Activated CD4-positive, alpha-beta memory T cell treated with anti-CD3 and anti-CD28 coated beads for 36 hours (primary cell): ENCODE measurements at regions of chr14 and their contacts with region 1.

Region 1: DNA sequence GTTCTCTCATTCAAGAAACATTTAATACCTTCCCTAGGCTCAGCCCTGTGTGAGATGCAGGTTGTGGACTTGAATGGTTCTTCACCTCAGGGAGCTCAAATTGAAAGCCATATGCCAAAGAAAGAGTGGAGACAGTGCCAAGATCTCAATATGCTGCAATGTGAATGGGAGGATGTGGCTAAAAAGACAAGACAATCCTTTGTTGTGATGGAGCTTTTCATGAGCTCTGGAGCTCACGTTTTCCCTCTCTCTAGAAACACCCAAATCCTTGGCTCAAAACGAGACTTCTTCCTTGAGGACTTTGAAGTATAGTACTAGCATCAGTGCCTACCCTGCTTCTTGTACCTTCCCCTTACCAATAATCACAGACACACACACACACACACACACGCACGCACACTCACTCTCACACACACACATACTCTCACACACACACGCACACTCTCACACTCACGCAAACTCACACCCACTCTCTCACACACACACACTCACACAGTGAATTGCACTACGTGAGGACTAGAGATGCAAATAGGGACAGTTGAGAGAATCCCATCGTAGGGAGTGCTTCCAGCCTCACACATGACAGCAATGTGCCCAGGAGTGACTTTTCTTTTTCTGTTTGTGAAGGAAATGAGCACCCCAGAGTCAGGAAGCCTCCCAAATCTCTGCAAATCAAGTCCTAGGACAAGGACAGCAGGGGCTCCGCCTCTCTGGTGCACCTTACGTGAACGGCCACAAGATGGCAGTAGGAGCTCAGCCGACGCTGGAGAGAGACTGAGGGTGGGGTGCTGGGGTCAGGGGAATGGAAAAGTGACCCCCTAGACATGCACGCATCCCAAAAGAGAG is 231.4 kb downstream of the PCNX1 start:
- DNase-seq: peak; percentile 68
- H3K4me3 Mint-ChIP-seq: no peak overlapping the region
- H3K27ac Mint-ChIP-seq: no peak overlapping the region
- H3K4me1 Mint-ChIP-seq: peaks cover 24% of the 10 kb centered on the region
- H3K27me3 Mint-ChIP-seq: no peaks in the 10 kb centered on the region

Region 2: DNA sequence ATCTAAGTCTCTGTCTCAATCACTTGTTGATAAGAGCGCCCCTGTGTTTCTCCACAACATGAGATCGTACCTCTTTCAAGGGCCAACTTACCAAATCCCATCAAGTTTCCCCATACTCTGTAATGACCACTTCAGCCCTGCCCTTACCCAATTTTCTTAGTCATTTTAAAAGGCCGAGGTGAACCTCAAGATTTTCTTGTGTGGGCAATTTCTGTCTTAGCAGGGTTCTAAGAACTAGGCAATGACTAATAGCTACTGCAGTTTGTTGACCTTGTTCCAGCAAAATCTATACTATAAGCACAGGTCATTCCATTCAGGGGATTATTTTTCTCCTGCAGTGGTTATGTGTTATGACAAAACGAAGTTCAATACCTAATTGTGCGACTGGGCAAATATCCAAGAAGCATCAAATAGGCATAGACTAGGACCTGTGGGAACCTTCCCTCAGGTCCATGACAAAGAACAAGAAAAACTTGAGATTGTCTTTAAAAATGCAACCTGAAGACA is 128.4 kb after region 1 on chr14:
- CTCF ChIA-PET with region 1: interaction called, 4 read pairs
- POLR2A ChIA-PET with region 1: interaction called, 3 read pairs
- intact Hi-C with region 1: loop called (anchors 1 kb)
- DNase-seq: peak; percentile 49
- H3K4me3 Mint-ChIP-seq: peak overlapping the region; percentile 48
- H3K27ac Mint-ChIP-seq: peak overlapping the region; percentile 77
- H3K4me1 Mint-ChIP-seq: peaks cover 37% of the 10 kb centered on the region
- H3K27me3 Mint-ChIP-seq: no peaks in the 10 kb centered on the region

Region 3: DNA sequence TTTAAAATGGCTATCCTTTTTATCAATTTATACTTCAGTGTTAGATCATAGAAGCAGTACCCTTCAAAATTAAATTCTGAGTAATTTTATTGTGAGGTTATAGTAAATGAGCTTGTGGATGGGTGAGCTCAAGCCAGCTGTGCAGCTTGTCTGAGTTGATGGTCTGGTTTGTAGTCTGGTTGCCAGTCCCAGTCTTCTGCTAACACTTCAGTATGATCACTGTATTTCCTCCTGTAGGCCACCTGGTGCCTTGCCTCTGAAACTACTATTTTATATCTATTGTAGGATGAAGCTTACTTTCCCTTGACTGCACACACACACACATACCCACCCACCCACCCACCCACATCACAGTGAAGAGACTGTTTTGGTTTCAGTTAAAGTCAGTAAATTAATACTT is 265.0 kb after region 1 on chr14:
- CTCF ChIA-PET with region 1: interaction called, 24 read pairs
- POLR2A ChIA-PET with region 1: no interaction called
- intact Hi-C with region 1: loop called (anchors 2 kb)
- DNase-seq: peak; percentile 35
- H3K4me3 Mint-ChIP-seq: no peak overlapping the region
- H3K27ac Mint-ChIP-seq: no peak overlapping the region
- H3K4me1 Mint-ChIP-seq: peaks cover 35% of the 10 kb centered on the region
- H3K27me3 Mint-ChIP-seq: no peaks in the 10 kb centered on the region

Region 4: DNA sequence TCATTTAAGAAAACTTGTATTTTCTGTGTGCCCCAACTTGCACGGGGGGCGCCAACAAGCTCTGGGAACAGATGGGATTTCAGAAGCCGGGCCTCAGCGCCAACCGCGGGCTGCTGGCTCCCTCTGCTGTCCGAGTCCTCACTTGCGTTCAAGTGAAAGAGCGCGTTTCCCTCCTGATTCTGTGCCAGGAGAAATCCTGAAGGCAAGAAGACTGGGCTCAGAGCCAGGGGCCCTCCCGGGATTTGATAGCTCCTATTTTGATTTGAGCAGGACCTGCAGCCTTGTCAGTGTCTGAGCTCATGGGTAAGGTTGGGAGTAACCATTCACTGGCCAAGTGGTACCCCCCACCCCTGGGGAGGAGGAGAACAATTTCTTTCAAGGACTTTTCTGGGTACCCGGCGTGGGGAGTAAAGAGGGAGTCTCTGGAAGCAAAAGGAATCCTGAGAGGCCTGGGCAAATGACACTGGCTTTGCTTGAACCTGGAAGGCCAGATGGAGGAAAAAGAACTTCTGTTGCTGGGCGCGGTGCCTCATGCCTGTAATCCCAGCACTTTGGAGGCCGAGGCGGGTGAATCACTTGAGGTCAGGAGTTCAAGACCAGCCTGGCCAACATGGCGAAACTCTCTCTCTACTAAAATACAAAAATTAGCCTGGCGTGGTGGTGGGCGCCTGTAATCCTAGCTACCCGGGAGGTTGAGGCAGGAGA is 614.6 kb after region 1 on chr14:
- CTCF ChIA-PET with region 1: interaction called, 132 read pairs
- POLR2A ChIA-PET with region 1: interaction called, 3 read pairs
- intact Hi-C with region 1: loop called (anchors 1 kb)
- DNase-seq: peak; percentile 79
- H3K4me3 Mint-ChIP-seq: no peak overlapping the region
- H3K27ac Mint-ChIP-seq: no peak overlapping the region
- H3K4me1 Mint-ChIP-seq: no peaks in the 10 kb centered on the region
- H3K27me3 Mint-ChIP-seq: peaks cover 3% of the 10 kb centered on the region